ENCODE measurements at regions of chr1 and their contacts with region 1.

Region 1: DNA sequence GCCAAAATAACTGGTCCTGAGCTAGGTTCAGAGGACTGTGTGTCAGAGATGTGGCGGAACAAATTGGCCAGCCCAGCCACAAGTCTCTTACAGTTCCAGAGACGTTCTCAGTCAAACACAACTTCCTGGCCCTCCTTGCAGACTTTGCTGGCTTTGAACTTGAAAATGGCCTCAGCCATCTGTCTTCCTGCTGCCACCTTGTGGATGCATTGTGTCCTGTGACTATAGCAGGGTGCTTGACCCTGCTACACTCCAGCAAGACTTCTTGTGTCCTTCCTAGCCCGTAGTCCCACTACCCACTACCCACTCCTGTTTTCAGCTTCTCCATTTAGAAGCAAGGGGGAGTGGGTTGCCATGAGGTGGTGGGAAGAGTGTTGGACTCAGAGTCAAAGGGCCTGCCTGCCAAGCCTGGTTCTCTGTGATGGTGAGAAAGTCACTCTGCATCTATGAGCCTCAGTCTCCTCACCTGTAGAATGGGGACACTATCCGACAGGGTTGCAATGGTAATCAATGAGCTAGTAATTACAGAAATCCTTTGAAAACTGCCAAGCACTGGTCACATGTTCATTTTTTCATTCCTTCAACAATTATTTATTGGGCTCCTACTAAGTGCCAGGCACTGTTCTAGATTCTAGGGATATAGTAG is 109.9 kb downstream of the IGSF21 start:
- DNase-seq: peak; percentile 27 to 68
- H3K4me3 ChIP-seq: no peak overlapping the region
- H3K27ac ChIP-seq: no peak overlapping the region
- H3K4me1 ChIP-seq: no peaks in the 10 kb centered on the region
- H3K27me3 ChIP-seq: no peaks in the 10 kb centered on the region; a peak in 1 of 7 replicates
- CTCF ChIP-seq: peak; percentile 76 to 87 (median 76)
- EP300 ChIP-seq: no peak
- POLR2A ChIP-seq: no peak
- RAD21 ChIP-seq: peak; percentile 68 to 81

Region 2: DNA sequence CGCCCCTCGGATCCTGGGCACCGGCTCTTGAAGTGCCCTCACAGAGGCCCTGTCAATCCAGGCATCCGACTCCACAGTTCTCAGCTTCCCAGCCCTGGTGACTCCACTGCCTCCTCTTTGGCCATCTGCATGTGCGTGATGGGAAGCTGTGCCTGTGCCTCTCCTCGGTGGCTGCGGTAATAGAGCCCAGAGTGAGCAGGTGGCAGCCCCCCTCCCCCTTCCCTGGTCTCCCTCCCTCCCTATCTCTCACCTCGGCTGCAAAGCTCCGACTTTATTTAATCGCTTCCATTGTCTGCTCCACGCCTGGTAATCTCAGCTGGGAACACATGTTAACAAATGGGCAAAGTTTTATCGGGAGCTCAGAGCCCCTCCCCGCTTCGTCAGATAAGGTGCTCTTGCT is 18.1 kb before region 1 on chr1:
- CTCF ChIA-PET with region 1: interaction called, 26 read pairs
- POLR2A ChIA-PET with region 1: no interaction called
- DNase-seq: peak in 1 of 2 experiments; percentile 55
- H3K4me3 ChIP-seq: no peak overlapping the region
- H3K27ac ChIP-seq: no peak overlapping the region
- H3K4me1 ChIP-seq: peaks cover 4 to 13% (median 8%) of the 10 kb centered on the region in 4 experiments
- H3K27me3 ChIP-seq: no peaks in the 10 kb centered on the region
- CTCF ChIP-seq: no peak
- EP300 ChIP-seq: no peak
- POLR2A ChIP-seq: no peak
- RAD21 ChIP-seq: peak in 1 of 2 experiments; percentile 5; a peak in 1 of 4 replicates

Region 3: DNA sequence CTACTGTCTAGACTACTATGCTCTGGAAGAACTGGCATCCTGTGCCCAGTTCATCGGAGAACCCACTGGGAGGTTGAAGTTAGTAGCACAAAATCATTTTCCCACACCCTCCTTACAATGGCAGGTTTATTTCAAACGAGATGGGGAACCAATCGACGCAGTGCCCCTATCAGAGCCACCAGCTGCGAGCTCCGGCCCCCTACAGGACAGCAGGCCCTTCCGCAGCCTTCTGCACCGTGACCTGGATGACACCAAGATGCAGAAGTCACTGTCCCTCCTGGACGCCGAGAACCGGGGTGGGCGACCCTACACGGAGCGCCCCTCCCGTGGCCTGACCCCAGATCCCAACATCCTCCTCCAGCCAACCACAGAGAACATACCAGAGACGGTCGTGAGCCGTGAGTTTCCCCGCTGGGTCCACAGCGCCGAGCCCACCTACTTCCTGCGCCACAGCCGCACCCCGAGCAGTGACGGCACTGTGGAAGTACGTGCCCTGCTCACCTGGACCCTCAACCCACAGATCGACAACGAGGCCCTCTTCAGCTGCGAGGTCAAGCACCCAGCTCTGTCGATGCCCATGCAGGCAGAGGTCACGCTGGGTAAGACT is 147.7 kb after region 1 on chr1:
- CTCF ChIA-PET with region 1: no interaction called
- POLR2A ChIA-PET with region 1: no interaction called
- DNase-seq: no peak
- H3K4me3 ChIP-seq: no peak overlapping the region
- H3K27ac ChIP-seq: no peak overlapping the region
- H3K4me1 ChIP-seq: no peaks in the 10 kb centered on the region; a peak in 2 of 7 replicates
- H3K27me3 ChIP-seq: peaks cover 0 to 3% (median 0%) of the 10 kb centered on the region in 4 experiments; a peak in 3 of 7 replicates
- CTCF ChIP-seq: peak; percentile 23 to 57 (median 37); a peak in 3 of 4 replicates
- EP300 ChIP-seq: no peak
- POLR2A ChIP-seq: no peak
- RAD21 ChIP-seq: peak; percentile 6 to 22; a peak in 2 of 4 replicates

Measured in H1 (cell line).